ENCODE measurements at regions of chr1 and their contacts with region 1.

Region 1: GRCh38 chr1:168360151-168361021 is 79.7 kb downstream of the TBX19 start:
- DNase-seq: peak; percentile 81
- H3K4me3 Mint-ChIP-seq: no peak overlapping the region
- H3K27ac Mint-ChIP-seq: peak overlapping the region; percentile 72
- H3K4me1 Mint-ChIP-seq: peaks cover 59% of the 10 kb centered on the region
- H3K27me3 Mint-ChIP-seq: no peaks in the 10 kb centered on the region

Region 2: DNA sequence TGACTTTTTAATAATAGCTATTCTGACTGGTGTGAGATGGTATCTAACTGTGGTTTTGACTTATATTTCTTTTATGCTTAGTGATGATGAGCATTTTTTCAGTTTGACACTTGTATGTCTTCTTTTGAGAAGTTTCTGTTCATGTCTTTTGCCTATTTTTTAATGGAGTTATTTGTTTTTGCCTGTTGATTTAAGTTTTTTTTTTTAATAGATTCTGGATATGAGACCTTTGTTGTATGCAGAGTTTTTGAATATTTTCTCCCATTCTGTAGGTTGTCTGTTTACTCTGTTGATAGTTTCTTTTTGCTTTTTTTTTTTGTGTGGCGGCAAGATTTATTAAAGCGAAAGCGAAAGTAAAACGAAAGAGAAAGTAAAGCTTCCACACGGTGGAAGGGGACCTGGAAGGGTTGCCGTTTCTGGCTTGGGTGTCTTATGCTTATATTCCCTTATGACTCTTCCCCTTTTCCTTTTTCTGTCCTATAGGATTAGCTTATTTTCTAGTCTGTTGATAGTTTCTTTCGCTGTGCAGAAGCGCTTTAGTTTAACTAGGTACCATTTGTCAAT is 12.2 kb before region 1 on chr1:
- CTCF ChIA-PET with region 1: interaction called, 263 read pairs
- POLR2A ChIA-PET with region 1: interaction called, 64 read pairs
- DNase-seq: no peak
- H3K4me3 Mint-ChIP-seq: peak overlapping the region; percentile 81
- H3K27ac Mint-ChIP-seq: peak overlapping the region; percentile 84
- H3K4me1 Mint-ChIP-seq: peaks cover 41% of the 10 kb centered on the region
- H3K27me3 Mint-ChIP-seq: peaks cover 1% of the 10 kb centered on the region

Region 3: DNA sequence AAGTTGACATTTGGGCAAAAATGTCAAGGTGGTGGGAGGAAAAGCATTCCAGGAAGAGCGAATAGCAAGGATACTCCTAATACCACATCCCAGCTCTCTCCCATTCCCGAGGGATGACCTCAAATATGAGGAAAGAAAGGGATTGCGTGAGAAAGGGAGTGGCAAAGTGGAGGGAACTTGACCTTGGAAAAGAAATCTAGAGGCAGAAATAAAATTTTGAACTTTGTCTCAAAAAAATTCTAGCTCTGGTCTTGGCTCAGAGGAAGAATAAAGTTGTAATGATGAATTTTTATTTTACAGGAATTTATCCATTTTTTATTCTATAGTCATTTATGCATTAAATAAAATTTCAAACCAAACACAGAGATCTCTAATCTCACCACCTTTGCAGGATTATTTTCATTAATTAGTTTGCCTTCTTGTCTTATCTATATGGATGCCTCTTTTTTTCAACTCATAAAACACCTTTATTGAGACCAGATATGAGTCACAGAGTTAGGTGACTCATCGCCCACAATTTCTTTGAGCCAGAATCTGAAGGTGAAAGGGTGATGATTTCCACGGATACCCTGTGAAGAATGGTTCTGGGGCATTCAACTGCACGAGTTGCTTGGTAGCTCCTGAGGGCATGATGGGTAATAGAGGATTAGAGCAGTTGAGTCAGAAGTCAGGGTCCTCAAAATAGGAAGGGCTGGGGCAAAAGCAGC is 48.3 kb after region 1 on chr1:
- CTCF ChIA-PET with region 1: interaction called, 5 read pairs
- POLR2A ChIA-PET with region 1: interaction called, 15 read pairs
- DNase-seq: peak; percentile 73
- H3K4me3 Mint-ChIP-seq: peak overlapping the region; percentile 26
- H3K27ac Mint-ChIP-seq: peak overlapping the region; percentile 86
- H3K4me1 Mint-ChIP-seq: peaks cover 56% of the 10 kb centered on the region
- H3K27me3 Mint-ChIP-seq: no peaks in the 10 kb centered on the region

Region 4: DNA sequence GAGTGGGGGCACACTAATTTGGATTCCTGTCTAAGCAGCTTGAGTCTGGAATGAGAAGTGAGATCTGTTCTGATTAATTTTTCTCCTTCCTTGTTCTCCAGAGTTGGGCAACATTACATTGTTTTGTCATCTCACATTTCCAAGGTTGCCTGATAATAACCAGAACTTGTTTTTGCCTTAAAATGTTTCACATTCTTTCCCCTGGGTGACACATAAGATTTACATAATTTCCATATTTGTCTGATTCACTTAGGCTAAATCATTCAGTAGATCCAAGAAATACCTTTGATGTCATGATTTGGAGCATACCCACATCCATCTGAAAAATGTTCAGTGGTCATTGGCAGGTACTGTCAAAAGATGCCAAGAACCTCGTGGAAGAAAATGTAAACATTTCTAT is 123.2 kb after region 1 on chr1:
- CTCF ChIA-PET with region 1: no interaction called
- POLR2A ChIA-PET with region 1: no interaction called
- DNase-seq: no peak
- H3K4me3 Mint-ChIP-seq: no peak overlapping the region
- H3K27ac Mint-ChIP-seq: no peak overlapping the region
- H3K4me1 Mint-ChIP-seq: peaks cover 45% of the 10 kb centered on the region
- H3K27me3 Mint-ChIP-seq: no peaks in the 10 kb centered on the region

Measured in activated CD4-positive, alpha-beta memory T cell treated with anti-CD3 and anti-CD28 coated beads, Interleukin-2, amount 10 ng/mL, durations not matched to agents 7 days and 5 days (primary cell).